Thyroid gland (tissue), 4 donors: ENCODE measurements at regions of chr4 and their contacts with region 1.

Region 1: GRCh38 chr4:6716018-6716911 is at the start of gene BLOC1S4:
- DNase-seq: peak; percentile 86 to 87
- H3K4me3 ChIP-seq: peak within 1 kb of the TSS; percentile 57 to 68 (median 67)
- H3K27ac ChIP-seq: peak within 1 kb of the TSS; percentile 64 to 90 (median 80)
- H3K4me1 ChIP-seq: peaks cover 7 to 14% of the 10 kb centered on the region in 2 donors
- H3K27me3 ChIP-seq: no peaks in the 10 kb centered on the region
- CTCF ChIP-seq: peak in 3 of 6 experiments; percentile 26 to 33 (median 27)
- POLR2A ChIP-seq: peak; percentile 35 to 88
- total RNA-seq, gene BLOC1S4: 11.7 to 31.3 (median 22.1) TPM

Region 2: DNA sequence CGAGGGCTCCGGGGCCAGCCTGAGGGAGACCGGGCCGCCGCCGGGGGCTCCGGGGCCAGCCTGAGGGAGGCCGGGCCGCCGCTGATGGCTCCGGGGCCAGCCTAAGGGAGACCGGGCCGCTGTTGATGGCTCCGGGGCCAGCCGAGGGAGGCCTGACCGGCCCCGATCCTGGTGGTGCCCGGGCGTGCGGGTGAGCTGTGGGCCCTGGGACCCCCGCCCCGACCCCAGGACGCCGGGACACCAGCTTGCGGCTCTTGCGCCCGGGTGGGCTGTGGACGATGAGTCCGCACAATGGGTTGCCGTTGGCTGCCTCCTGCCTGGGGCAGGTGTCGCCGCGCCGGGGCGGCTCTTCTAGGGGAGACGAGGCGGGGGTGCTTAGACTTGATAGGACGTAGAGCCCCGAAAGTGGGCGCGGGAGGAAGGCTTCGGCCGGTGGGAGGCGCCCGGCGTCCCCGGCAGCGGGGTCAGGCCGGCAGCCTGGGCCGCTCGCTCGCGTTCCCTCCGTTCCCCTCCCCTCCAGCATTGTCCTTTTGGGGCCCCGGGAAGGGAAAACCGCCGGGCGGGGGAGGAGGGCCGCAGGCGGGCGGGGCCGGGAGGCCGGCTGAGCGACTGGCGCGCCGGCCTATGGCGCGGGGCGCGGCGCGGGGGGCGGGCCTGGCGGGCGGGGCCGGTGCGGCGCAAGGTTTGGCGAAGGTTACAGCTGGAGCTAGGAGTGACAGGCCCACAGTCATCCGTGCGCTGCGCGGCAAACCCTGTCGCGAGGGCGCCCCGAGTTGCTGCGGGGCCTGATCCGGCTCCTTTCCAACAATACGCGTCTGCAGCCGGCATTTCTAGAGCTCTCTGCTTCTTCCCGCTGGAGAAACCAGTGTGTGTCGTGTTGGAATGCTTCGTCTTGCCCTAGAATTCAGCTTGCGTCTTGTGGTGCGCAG is 67.1 kb after region 1 on chr4:
- intact Hi-C with region 1: loop called (anchors 5 kb)
- DNase-seq: peak; percentile 90
- H3K4me3 ChIP-seq: peak overlapping the region; percentile 74 to 100 (median 95)
- H3K27ac ChIP-seq: peak overlapping the region; percentile 91 to 99 (median 98)
- H3K4me1 ChIP-seq: peaks cover 12 to 20% of the 10 kb centered on the region in 2 donors
- H3K27me3 ChIP-seq: no peaks in the 10 kb centered on the region
- CTCF ChIP-seq: no peak
- POLR2A ChIP-seq: peak in 1 of 2 donors; percentile 82

Region 3: DNA sequence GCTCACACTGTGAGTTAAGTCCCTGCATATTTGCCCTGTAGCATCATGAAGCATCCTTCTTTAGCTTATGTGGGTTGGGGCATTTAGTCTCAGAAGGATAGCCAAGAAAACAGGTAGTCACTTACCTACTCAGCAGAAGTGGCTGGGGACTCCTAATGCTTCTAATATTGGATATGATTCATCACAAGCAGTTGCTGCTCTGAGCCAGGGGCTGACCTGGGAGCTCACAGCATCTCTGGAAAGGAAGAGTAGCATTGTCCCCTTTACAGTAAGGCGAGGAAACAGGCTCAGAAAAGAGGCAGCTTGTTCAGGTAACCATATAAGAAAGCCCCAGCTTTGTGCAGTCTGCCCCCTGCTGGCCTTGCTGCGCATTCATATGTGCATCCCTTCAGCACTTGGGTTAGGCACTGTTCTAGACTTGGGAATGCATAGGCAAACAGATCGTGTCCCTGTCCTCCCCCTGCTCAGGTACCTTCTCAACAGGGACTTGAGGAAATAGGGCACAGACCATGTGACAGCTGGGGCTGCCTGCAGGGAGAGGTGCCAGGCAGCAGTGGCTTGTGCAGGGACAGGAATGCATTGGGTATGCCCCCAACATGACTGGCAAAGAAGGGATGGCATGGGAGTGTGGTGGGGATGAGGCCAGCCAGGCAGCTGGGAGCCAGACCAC is 157.7 kb after region 1 on chr4:
- intact Hi-C with region 1: loop called (anchors 2 kb)
- DNase-seq: peak; percentile 72 to 78
- H3K4me3 ChIP-seq: no peak overlapping the region
- H3K27ac ChIP-seq: no peak overlapping the region
- H3K4me1 ChIP-seq: peaks cover 0 to 11% of the 10 kb centered on the region in 2 donors
- H3K27me3 ChIP-seq: no peaks in the 10 kb centered on the region
- CTCF ChIP-seq: peak; percentile 37 to 72 (median 68)
- POLR2A ChIP-seq: no peak

Region 4: GRCh38 chr4:7322166-7322991 is 606.1 kb after region 1 on chr4:
- intact Hi-C with region 1: no loop called
- DNase-seq: peak; percentile 60 to 68
- H3K4me3 ChIP-seq: no peak overlapping the region
- H3K27ac ChIP-seq: no peak overlapping the region
- H3K4me1 ChIP-seq: peaks cover 0 to 5% of the 10 kb centered on the region in 2 donors
- H3K27me3 ChIP-seq: no peaks in the 10 kb centered on the region
- CTCF ChIP-seq: no peak
- POLR2A ChIP-seq: no peak